ENCODE measurements at regions of chr2 and their contacts with region 1.

Region 1: GRCh38 chr2:225889446-225889850 is 489.9 kb downstream of the NYAP2 start:
- DNase-seq: peak in 1 of 2 donors; percentile 2
- ATAC-seq: no peak

Region 2: GRCh38 chr2:226971084-226971483 is 1081.6 kb after region 1 on chr2:
- intact Hi-C with region 1: loop called in 1 of 2 experiments (anchors 5 kb)
- DNase-seq: no peak
- ATAC-seq: no peak

Measured in left colon (tissue), 2 donors.